CD4-positive, alpha-beta T cell (primary cell): ENCODE measurements at regions of chr11 and their contacts with region 1.

Region 1: GRCh38 chr11:66677599-66678375 is at the start of gene RBM4B:
- DNase-seq: peak; percentile 91 to 99 (median 94)
- ATAC-seq: peak; percentile 78
- H3K4me3 ChIP-seq: peak within 1 kb of the TSS; percentile 92
- H3K4me3 Mint-ChIP-seq: peak within 1 kb of the TSS; percentile 98
- H3K27ac ChIP-seq: peak within 1 kb of the TSS; percentile 98 to 99
- H3K27ac Mint-ChIP-seq: peak within 1 kb of the TSS; percentile 98
- H3K4me1 ChIP-seq: peaks cover 32% of the 10 kb centered on the region
- H3K4me1 Mint-ChIP-seq: peaks cover 49% of the 10 kb centered on the region
- H3K27me3 ChIP-seq: no peaks in the 10 kb centered on the region
- H3K27me3 Mint-ChIP-seq: no peaks in the 10 kb centered on the region
- CTCF ChIP-seq: no peak
- total RNA-seq, gene RBM4B: 3.8 to 5.1 TPM

Region 2: GRCh38 chr11:66363805-66364535 is 313.8 kb before region 1 on chr11:
- CTCF ChIA-PET with region 1: no interaction called
- POLR2A ChIA-PET with region 1: no interaction called
- intact Hi-C with region 1: no loop called
- DNase-seq: peak; percentile 51 to 77 (median 60)
- ATAC-seq: peak; percentile 77
- H3K4me3 ChIP-seq: no peak overlapping the region
- H3K4me3 Mint-ChIP-seq: no peak overlapping the region
- H3K27ac ChIP-seq: no peak overlapping the region
- H3K27ac Mint-ChIP-seq: no peak overlapping the region
- H3K4me1 ChIP-seq: no peaks in the 10 kb centered on the region
- H3K4me1 Mint-ChIP-seq: no peaks in the 10 kb centered on the region
- H3K27me3 ChIP-seq: no peaks in the 10 kb centered on the region
- H3K27me3 Mint-ChIP-seq: no peaks in the 10 kb centered on the region
- CTCF ChIP-seq: peak; percentile 72

Region 3: GRCh38 chr11:66421492-66422205 is 256.1 kb before region 1 on chr11:
- CTCF ChIA-PET with region 1: interaction called, 8 read pairs
- POLR2A ChIA-PET with region 1: interaction called, 10 read pairs
- intact Hi-C with region 1: loop called in 1 of 2 experiments (anchors 5 kb)
- DNase-seq: peak; percentile 78 to 95 (median 86)
- ATAC-seq: peak; percentile 97
- H3K4me3 ChIP-seq: no peak overlapping the region
- H3K4me3 Mint-ChIP-seq: no peak overlapping the region
- H3K27ac ChIP-seq: no peak overlapping the region
- H3K27ac Mint-ChIP-seq: peak overlapping the region; percentile 45
- H3K4me1 ChIP-seq: peaks cover 11% of the 10 kb centered on the region
- H3K4me1 Mint-ChIP-seq: peaks cover 6% of the 10 kb centered on the region
- H3K27me3 ChIP-seq: peaks cover 26 to 37% of the 10 kb centered on the region in 2 experiments
- H3K27me3 Mint-ChIP-seq: peaks cover 40% of the 10 kb centered on the region
- CTCF ChIP-seq: no peak

Region 4: DNA sequence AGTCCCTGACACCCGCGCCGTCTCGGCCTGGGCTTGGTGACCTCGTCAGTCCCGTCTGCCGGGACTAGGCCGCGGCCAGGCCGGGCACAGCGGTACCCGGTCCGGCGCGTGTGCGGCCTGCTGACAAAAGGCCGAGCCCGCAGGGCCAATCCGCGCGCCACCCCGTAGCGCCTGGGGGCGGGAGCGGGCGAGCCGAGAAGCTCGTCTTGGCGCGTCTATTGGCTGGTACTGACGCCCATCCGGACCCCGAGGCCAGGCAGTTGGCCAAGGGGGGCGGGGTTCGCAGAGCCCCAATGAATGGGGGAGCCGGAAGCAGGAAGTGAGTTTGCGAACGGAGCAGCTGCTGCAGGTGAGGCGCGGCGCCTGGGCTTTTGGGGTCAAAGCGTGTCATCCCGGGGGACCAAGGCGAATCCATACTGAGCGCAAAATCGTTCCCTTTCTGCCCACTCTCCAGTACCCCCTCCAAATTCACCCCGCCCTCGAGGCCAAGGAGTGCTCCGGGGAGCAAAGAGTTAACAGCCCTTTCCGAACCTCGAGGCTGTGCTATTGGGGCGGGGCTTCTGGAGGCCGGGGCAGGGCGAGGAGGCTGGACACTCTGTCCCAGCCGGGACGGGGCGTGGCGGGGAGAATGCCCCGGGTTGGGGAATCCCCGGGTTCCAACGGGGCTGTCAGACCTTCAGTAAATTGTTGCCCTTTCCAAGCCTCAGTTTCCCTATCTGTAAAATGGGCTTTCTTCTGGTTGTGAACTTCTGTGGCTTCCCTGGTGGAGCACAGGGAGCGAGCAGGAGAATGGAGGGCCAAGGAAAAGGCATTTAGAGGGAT is 197.5 kb before region 1 on chr11 and contains the start of gene DPP3:
- CTCF ChIA-PET with region 1: interaction called, 13 read pairs
- POLR2A ChIA-PET with region 1: interaction called, 7 read pairs
- intact Hi-C with region 1: loop called (anchors 1 to 5 kb)
- DNase-seq: peak; percentile 91 to 97 (median 95)
- ATAC-seq: peak; percentile 98
- H3K4me3 ChIP-seq: peak within 1 kb of the TSS; percentile 79
- H3K4me3 Mint-ChIP-seq: peak within 1 kb of the TSS; percentile 91
- H3K27ac ChIP-seq: peak within 1 kb of the TSS; percentile 70 to 79
- H3K27ac Mint-ChIP-seq: peak within 1 kb of the TSS; percentile 83
- H3K4me1 ChIP-seq: peaks cover 29% of the 10 kb centered on the region
- H3K4me1 Mint-ChIP-seq: peaks cover 24% of the 10 kb centered on the region
- H3K27me3 ChIP-seq: no peaks in the 10 kb centered on the region
- H3K27me3 Mint-ChIP-seq: no peaks in the 10 kb centered on the region
- CTCF ChIP-seq: no peak
- total RNA-seq, gene DPP3: 16.9 to 17.7 TPM

Region 5: DNA sequence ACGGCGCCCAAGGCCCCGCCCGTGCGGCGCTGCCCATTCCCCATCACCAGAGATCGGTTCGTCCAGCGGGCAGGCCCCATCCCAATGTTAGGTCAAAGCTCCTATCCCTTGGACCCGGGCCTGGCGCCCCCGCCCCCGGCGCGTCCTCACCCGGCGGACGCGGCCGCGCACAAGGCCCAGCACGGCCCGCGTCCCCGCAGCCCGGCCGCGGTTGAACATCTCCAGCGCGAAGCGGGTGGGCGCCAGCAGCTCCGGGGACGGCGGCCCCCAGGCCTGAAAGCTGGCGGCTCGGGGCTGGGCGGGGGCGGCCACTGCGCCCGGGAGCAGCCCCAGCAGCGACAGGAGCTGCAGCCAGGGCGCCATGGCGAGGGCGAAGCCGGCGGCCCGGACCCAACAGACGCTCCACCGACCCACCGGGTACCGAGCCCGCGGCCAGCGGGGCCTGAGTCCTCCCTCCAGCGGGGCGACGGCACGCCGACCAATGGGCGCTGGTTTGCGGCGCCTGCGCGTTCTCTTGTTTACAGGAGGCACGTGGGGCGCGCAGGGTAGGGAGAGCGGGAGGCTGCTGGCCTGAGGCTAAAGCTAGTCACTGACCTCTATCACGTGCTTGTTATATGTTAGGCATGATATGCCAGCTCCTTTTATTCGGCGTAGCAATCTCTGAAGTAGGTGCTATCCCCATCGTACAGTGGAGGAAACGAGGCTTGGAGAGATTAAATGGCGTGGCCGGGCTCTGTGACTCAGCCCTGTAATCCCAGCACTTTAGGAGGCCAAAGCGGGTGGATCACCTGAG is 109.5 kb before region 1 on chr11 and contains the start of gene CTSF:
- CTCF ChIA-PET with region 1: interaction called, 4 read pairs
- POLR2A ChIA-PET with region 1: interaction called, 35 read pairs
- intact Hi-C with region 1: no loop called
- DNase-seq: peak; percentile 50 to 82 (median 65)
- ATAC-seq: peak; percentile 93
- H3K4me3 ChIP-seq: peak within 1 kb of the TSS; percentile 46
- H3K4me3 Mint-ChIP-seq: peak within 1 kb of the TSS; percentile 77
- H3K27ac ChIP-seq: no peak within 1 kb of the TSS
- H3K27ac Mint-ChIP-seq: no peak within 1 kb of the TSS
- H3K4me1 ChIP-seq: peaks cover 12% of the 10 kb centered on the region
- H3K4me1 Mint-ChIP-seq: no peaks in the 10 kb centered on the region
- H3K27me3 ChIP-seq: no peaks in the 10 kb centered on the region
- H3K27me3 Mint-ChIP-seq: peaks cover 7% of the 10 kb centered on the region
- CTCF ChIP-seq: no peak
- total RNA-seq, gene CTSF: 16.0 to 16.8 TPM

Region 6: GRCh38 chr11:66616379-66617154 is 61.2 kb before region 1 on chr11 and contains the start of gene RBM14:
- CTCF ChIA-PET with region 1: interaction called, 25 read pairs
- POLR2A ChIA-PET with region 1: interaction called, 88 read pairs
- intact Hi-C with region 1: loop called (anchors 1 kb)
- DNase-seq: peak; percentile 95 to 100 (median 97)
- ATAC-seq: peak; percentile 81
- H3K4me3 ChIP-seq: peak within 1 kb of the TSS; percentile 99
- H3K4me3 Mint-ChIP-seq: peak within 1 kb of the TSS; percentile 99
- H3K27ac ChIP-seq: peak within 1 kb of the TSS; percentile 96 to 98
- H3K27ac Mint-ChIP-seq: peak within 1 kb of the TSS; percentile 94
- H3K4me1 ChIP-seq: peaks cover 50% of the 10 kb centered on the region
- H3K4me1 Mint-ChIP-seq: peaks cover 53% of the 10 kb centered on the region
- H3K27me3 ChIP-seq: no peaks in the 10 kb centered on the region
- H3K27me3 Mint-ChIP-seq: no peaks in the 10 kb centered on the region
- CTCF ChIP-seq: no peak
- total RNA-seq, gene RBM14: 239 to 250 TPM

Region 7: DNA sequence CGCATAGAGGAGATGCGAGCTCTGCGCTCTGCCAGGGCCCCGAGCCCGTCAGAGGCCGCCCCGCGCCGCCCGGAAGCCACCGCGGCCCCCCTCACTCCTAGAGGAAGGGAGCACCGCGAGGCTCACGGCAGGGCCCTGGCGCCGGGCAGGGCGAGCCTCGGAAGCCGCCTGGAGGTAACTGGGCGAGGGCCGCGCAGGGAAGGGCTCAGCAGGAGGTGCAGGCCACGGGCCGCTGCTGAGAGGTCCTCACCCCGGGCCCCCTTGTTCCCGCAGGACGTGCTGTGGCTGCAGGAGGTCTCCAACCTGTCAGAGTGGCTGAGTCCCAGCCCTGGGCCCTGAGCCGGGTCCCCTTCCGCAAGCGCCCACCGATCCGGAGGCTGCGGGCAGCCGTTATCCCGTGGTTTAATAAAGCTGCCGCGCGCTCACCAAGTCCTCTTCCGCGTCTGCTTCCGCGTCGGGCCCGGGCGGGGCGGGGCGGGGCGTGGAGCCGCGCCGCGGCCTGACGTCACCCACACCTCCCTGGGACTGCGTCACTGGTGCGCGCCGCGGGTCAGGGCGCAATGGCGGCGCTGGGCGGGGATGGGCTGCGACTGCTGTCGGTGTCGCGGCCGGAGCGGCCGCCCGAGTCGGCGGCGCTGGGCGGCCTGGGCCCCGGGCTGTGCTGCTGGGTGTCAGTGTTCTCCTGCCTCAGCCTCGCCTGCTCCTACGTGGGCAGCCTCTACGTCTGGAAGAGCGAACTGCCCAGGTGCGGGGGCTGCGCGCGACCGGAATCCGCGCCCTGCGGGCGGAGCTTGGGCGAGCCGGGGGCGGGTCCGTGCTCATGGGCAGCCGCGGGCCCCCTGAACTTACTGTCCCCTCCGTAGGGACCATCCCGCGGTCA is 165.3 kb after region 1 on chr11 and contains the start of gene RCE1:
- CTCF ChIA-PET with region 1: interaction called, 7 read pairs
- POLR2A ChIA-PET with region 1: interaction called, 33 read pairs
- intact Hi-C with region 1: no loop called
- DNase-seq: peak; percentile 80 to 98 (median 90)
- ATAC-seq: peak; percentile 82
- H3K4me3 ChIP-seq: peak within 1 kb of the TSS; percentile 96
- H3K4me3 Mint-ChIP-seq: peak within 1 kb of the TSS; percentile 94
- H3K27ac ChIP-seq: peak within 1 kb of the TSS; percentile 97 to 99
- H3K27ac Mint-ChIP-seq: peak within 1 kb of the TSS; percentile 96
- H3K4me1 ChIP-seq: peaks cover 49% of the 10 kb centered on the region
- H3K4me1 Mint-ChIP-seq: peaks cover 52% of the 10 kb centered on the region
- H3K27me3 ChIP-seq: no peaks in the 10 kb centered on the region
- H3K27me3 Mint-ChIP-seq: no peaks in the 10 kb centered on the region
- CTCF ChIP-seq: no peak
- total RNA-seq, gene RCE1: 60.1 to 63.0 TPM